ENCODE measurements at regions of chr1 and their contacts with region 1.

Region 1: DNA sequence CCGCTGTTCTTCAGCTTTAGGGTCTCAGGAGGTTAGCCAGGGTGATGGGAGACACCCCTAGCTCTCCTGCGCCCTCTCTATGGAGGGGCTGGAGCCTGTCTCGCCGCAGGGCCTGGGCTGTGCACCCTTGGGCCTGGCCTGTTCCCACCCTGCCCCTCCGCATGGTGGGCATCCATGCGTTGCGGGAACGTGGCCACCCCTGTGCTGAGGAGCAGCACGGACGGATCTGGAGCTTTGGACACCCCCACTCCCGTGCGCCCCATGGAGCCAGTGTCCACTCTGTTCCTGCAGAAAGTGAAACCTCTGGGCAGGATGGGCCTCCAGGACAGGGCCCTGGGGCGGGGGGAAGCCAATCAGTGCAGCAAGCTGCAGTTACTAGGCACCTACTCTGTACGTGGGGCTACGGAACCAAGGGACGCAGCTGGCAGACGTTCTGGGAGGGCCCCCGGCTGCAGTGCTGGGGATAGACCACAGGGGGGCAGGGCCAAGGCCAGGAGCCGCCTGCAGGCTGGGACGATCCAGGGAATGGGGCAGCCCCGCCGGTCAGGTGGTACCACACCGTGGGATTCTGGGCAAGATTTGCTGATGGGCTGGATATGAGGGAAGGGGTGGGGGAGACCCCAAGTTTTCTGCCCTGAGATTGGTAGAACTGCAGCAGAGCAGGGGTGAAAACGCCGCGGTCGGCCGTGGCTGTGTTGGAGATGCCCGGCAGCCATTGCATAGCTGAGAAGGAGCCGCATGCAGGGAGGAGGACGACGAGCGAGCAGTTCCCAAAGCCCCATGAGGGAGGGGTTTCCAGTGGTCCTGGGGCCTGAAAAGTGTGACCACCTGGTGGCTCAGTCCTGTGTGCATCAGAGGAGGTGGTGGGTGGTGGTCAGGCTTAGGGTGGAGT is 43.3 kb downstream of the TP73 start:
- DNase-seq: peak; percentile 96
- H3K4me3 ChIP-seq: no peak overlapping the region
- H3K27ac ChIP-seq: no peak overlapping the region
- H3K4me1 ChIP-seq: peaks cover 0 to 43% of the 10 kb centered on the region in 2 experiments; a peak in 1 of 4 replicates
- H3K27me3 ChIP-seq: no peaks in the 10 kb centered on the region
- CTCF ChIP-seq: peak; percentile 61
- EP300 ChIP-seq: no peak
- RAD21 ChIP-seq: peak; percentile 68

Region 2: DNA sequence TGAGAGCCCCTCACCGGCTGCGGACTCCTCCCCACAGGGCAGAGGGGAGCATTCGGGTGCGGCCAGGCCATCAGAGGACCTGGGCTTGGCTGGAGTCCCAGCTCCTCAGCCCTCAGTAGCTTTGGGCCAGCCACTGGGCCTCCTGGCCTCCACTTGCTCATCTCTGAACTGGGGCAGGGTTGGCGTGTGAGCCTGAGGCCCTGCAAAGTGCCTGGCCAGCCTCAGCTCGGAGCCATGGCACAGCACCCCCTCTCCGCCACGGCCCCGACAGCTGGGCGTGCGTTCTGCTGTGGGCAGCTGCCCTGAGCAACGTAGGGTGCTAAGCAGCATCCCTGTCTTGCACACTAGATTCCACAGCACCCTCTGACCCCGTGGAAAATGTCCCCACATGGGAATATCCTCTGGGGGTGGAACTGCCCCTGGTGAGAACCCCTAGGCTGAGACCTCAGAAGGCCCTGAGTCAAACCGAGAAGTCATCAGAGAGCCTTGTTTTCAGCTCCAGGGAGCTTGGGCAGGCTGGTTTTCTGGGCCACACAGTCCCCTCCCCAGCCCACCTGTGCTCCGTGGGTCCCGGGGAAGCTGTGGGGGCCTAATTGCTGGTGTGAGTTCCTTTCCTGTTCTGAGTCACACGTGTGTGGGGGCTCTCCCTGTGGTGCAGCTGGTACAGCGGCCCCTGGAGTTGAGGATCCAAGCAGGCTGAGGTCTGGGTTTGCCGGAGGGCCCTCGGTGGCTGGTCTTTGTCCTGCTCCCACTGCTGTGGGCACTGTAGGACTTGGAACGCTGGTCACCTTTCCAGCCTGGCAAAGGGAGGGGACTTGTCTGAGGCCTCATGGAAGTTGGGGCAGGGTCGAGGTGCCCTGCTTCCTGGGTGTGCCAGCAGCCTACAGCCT is 18.7 kb before region 1 on chr1:
- CTCF ChIA-PET with region 1: interaction called, 19 read pairs
- POLR2A ChIA-PET with region 1: no interaction called
- DNase-seq: no peak
- H3K4me3 ChIP-seq: no peak overlapping the region
- H3K27ac ChIP-seq: no peak overlapping the region
- H3K4me1 ChIP-seq: peaks cover 0 to 4% of the 10 kb centered on the region in 2 experiments; a peak in 1 of 4 replicates
- H3K27me3 ChIP-seq: no peaks in the 10 kb centered on the region
- CTCF ChIP-seq: no peak
- EP300 ChIP-seq: no peak
- RAD21 ChIP-seq: no peak

Region 3: DNA sequence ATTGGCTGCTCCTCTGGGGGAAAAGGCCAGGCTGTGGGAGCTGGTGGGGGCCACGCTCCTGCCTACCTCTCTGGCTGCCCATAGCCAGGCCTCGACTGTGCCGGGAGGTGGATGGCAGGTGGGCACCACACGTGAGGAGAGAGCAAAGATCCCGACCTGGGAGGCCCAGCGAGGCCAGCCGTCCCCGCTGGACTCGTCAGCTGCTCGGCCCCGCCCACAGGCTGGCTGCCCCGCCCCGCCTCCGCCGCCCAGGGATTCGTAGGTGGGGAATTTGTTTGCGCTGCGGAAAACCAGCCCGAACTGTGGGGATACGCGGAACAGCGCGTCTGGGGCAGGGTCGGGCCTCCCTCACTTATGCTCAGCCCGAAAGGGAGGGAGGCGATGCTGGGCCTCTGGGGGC is 11.6 kb before region 1 on chr1:
- CTCF ChIA-PET with region 1: interaction called, 19 read pairs
- POLR2A ChIA-PET with region 1: no interaction called
- DNase-seq: no peak
- H3K4me3 ChIP-seq: no peak overlapping the region
- H3K27ac ChIP-seq: no peak overlapping the region
- H3K4me1 ChIP-seq: no peaks in the 10 kb centered on the region; a peak in 1 of 4 replicates
- H3K27me3 ChIP-seq: no peaks in the 10 kb centered on the region
- CTCF ChIP-seq: no peak
- EP300 ChIP-seq: no peak
- RAD21 ChIP-seq: no peak

Region 4: DNA sequence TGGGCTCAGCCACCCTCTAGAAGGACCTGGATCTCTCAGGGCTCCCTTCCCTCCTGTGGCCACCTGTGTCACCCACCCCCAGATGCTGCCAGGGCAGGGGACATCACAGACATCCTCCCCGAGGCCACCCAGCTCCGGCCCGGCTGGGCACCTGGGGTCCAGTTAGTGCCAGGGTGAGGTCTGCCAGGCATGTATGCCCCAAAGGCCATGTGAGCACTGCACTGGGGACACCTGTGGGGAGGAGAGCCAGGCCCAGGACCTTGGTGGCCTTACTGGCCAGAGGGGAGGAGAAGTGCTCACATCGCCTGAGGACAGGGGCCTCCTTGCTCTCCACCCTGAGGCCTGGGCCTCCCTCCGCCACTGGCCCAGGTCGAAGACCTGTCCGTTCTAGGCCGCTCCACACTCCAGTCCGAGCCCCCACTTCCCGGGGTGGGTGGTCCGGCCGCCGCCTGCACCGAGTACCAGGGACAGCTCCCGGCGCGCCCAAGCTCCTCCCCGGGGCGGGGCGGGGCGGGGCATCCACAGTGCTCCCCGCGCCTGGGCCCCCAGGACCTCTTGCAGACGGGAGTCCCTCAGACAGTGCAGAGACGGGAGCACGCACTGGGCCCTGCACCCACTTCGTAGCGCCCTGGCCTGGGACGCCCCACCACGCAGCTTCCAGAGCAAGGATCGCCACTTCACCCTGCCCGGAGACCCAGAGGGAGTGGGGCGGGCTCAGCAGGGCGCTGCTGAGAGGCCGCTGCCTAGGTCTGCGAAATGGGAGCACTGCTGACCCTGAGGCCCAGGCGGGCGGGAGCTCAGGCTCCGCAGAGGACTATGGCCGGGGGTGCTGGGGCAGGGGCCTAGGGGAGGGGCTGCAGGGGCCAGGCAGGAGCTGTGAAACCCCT is 22.4 kb after region 1 on chr1:
- CTCF ChIA-PET with region 1: interaction called, 369 read pairs
- POLR2A ChIA-PET with region 1: no interaction called
- DNase-seq: no peak
- H3K4me3 ChIP-seq: no peak overlapping the region
- H3K27ac ChIP-seq: peak overlapping the region in 1 of 2 experiments; percentile 97; a peak in 2 of 4 replicates
- H3K4me1 ChIP-seq: peaks cover 0 to 97% of the 10 kb centered on the region in 2 experiments; a peak in 2 of 4 replicates
- H3K27me3 ChIP-seq: no peaks in the 10 kb centered on the region
- CTCF ChIP-seq: no peak
- EP300 ChIP-seq: no peak
- RAD21 ChIP-seq: no peak

Region 5: DNA sequence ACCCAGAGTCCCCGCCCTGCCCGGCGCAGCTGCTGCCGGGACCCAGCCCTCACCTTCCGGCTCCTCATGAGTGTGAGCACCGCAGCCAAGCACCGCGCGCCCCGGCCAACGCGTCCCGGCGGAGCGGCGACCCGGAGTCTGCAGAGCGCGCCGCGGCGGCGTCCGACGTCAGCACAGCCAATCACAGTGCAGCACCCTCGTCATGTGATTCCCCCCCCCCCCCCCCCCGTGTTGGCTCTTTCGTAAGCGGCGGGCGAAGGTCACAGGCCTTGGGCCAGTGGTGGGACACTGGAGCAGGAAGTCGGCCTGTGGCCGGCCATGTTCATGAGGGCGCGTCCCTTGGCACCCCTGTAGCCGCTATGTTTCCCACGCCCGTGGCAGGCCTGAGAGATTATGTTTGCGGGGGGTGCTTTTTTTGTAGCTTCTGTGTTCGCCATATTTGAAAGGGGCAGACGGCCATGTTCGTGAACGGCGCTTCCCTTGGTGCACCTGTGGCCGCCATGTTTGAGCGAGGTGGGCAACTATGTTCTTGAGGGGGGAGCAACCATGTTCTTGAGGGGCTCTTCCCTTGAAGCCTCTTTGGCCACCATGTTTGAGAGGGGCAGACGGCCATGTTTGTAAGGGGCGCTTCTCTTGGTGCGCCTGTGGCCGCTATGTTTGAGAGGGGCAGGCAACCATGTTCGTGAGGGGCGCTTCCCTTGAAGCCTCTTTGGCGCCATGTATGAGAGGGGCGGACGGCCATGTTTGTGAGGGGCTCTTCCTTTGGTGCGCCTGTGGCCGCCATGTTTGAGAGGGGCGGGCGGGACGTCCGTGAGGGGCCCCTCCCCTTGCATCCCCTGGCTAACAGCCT is 204.8 kb after region 1 on chr1 and contains the start of gene C1orf174:
- CTCF ChIA-PET with region 1: no interaction called
- POLR2A ChIA-PET with region 1: no interaction called
- DNase-seq: peak; percentile 97
- H3K4me3 ChIP-seq: peak within 1 kb of the TSS; percentile 90 to 95
- H3K27ac ChIP-seq: peak within 1 kb of the TSS; percentile 91 to 97
- H3K4me1 ChIP-seq: peaks cover 0 to 18% of the 10 kb centered on the region in 2 experiments; a peak in 1 of 4 replicates
- H3K27me3 ChIP-seq: no peaks in the 10 kb centered on the region
- CTCF ChIP-seq: no peak
- EP300 ChIP-seq: no peak
- RAD21 ChIP-seq: no peak
- polyA plus RNA-seq, gene C1orf174: 21.4 and 22.8 TPM in 2 replicates